CD8-positive, alpha-beta T cell (primary cell): ENCODE measurements at regions of chr9 and their contacts with region 1.

Region 1: DNA sequence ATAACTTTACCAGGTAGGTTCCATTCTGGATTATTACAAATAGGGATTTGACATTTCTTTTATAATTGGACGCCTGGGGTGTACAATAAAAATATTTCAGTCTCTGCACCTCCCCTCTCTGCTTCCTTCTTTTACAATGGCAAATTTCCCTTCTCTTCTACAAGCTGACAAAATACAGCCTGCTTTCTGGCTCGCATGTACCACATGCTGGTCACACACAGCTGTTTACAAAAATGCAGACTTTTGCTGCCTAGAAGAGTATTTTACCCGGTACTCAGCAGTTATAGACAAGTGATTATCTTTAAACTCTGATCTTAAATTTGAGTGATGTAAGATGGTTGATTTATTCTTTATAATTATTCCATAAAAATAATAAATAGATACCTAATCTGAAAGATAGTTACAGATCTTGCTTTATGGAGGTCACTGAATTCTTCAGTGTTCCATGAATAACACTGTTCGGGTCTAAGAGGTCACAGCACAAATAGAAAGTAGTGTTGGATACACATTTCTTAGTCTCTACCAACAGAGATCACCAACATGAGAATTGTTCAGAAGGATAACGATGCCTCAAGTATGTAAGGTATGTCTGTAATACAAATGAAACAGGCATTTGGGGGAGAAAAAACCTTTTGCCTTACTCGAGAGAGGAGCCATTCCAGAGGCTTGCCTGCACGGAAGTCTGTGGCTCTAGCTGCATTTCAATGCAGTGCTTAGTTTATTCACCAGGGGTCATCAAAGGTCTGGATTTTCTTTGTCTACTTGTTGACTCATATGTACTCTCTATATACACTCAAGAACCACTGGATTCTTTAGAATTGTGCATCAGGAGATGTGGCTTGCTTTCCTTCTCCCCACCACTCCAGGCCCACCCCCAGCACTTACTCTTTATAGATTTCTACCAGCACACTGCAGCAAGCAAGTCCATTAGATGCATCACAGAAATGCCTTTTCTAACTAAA is 206.6 kb upstream of the RFX3 start:
- DNase-seq: peak in 6 of 9 experiments; percentile 1 to 67 (median 18)
- ATAC-seq: peak; percentile 97
- H3K4me3 ChIP-seq: no peak overlapping the region
- H3K4me3 Mint-ChIP-seq: peak overlapping the region; percentile 42
- H3K27ac ChIP-seq: no peak overlapping the region
- H3K27ac Mint-ChIP-seq: no peak overlapping the region
- H3K4me1 ChIP-seq: no peaks in the 10 kb centered on the region
- H3K4me1 Mint-ChIP-seq: peaks cover 12% of the 10 kb centered on the region
- H3K27me3 ChIP-seq: no peaks in the 10 kb centered on the region
- H3K27me3 Mint-ChIP-seq: peaks cover 2% of the 10 kb centered on the region
- CTCF ChIP-seq: peak; percentile 52

Region 2: GRCh38 chr9:3628239-3628638 is 104.1 kb before region 1 on chr9:
- CTCF ChIA-PET with region 1: no interaction called
- POLR2A ChIA-PET with region 1: no interaction called
- intact Hi-C with region 1: no loop called
- DNase-seq: no peak
- ATAC-seq: no peak
- H3K4me3 ChIP-seq: no peak overlapping the region
- H3K4me3 Mint-ChIP-seq: no peak overlapping the region
- H3K27ac ChIP-seq: no peak overlapping the region
- H3K27ac Mint-ChIP-seq: no peak overlapping the region
- H3K4me1 ChIP-seq: no peaks in the 10 kb centered on the region
- H3K4me1 Mint-ChIP-seq: no peaks in the 10 kb centered on the region
- H3K27me3 ChIP-seq: no peaks in the 10 kb centered on the region
- H3K27me3 Mint-ChIP-seq: no peaks in the 10 kb centered on the region
- CTCF ChIP-seq: no peak

Region 3: DNA sequence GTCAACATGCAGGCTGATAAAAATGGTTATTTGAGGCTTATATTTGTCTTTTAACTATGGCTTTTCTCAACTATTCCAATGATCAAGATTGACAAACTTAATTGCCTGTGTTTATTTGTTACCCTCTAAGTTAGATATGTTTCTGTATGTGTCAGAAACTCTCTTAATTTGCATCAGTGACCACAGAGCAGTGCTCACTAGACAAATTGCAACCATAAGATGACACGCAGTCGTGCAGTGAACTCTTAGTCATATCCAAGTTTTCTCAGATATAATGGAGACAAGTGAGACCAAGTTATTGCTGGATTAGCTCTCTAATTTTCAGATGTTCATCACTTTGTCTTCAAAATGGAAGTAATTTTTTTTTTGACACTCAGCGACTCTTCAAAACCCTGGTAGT is 135.7 kb after region 1 on chr9:
- CTCF ChIA-PET with region 1: no interaction called
- POLR2A ChIA-PET with region 1: no interaction called
- intact Hi-C with region 1: no loop called
- DNase-seq: no peak
- ATAC-seq: no peak
- H3K4me3 ChIP-seq: no peak overlapping the region
- H3K4me3 Mint-ChIP-seq: no peak overlapping the region
- H3K27ac ChIP-seq: no peak overlapping the region
- H3K27ac Mint-ChIP-seq: no peak overlapping the region
- H3K4me1 ChIP-seq: no peaks in the 10 kb centered on the region
- H3K4me1 Mint-ChIP-seq: no peaks in the 10 kb centered on the region
- H3K27me3 ChIP-seq: no peaks in the 10 kb centered on the region
- H3K27me3 Mint-ChIP-seq: peaks cover 10% of the 10 kb centered on the region
- CTCF ChIP-seq: no peak

Region 4: DNA sequence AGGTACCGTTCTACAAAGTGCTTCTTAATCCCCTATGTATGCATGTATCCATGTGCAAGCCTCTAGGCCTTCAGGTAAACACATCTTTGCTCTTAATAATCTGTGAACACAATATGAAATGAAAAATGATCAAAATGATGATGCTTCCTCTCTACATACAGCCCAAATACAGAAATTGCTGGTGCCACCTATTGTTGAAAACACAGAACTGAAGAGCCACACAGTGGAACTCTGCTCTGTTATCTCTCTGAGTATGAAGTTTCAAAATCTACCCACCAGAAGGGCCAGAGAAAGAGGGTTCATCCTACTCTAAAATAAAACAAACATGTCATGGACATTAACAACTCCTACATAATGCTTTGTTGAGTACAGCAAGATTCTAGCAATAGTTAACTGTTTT is 496.2 kb after region 1 on chr9:
- CTCF ChIA-PET with region 1: no interaction called
- POLR2A ChIA-PET with region 1: no interaction called
- intact Hi-C with region 1: loop called in 1 of 2 experiments (anchors 5 kb)
- DNase-seq: peak in 1 of 9 experiments; percentile 17
- ATAC-seq: no peak
- H3K4me3 ChIP-seq: no peak overlapping the region
- H3K4me3 Mint-ChIP-seq: no peak overlapping the region
- H3K27ac ChIP-seq: no peak overlapping the region
- H3K27ac Mint-ChIP-seq: no peak overlapping the region
- H3K4me1 ChIP-seq: no peaks in the 10 kb centered on the region
- H3K4me1 Mint-ChIP-seq: peaks cover 4% of the 10 kb centered on the region
- H3K27me3 ChIP-seq: no peaks in the 10 kb centered on the region
- H3K27me3 Mint-ChIP-seq: peaks cover 9% of the 10 kb centered on the region
- CTCF ChIP-seq: no peak